ENCODE measurements at regions of chr1 and their contacts with region 1.

Region 1: DNA sequence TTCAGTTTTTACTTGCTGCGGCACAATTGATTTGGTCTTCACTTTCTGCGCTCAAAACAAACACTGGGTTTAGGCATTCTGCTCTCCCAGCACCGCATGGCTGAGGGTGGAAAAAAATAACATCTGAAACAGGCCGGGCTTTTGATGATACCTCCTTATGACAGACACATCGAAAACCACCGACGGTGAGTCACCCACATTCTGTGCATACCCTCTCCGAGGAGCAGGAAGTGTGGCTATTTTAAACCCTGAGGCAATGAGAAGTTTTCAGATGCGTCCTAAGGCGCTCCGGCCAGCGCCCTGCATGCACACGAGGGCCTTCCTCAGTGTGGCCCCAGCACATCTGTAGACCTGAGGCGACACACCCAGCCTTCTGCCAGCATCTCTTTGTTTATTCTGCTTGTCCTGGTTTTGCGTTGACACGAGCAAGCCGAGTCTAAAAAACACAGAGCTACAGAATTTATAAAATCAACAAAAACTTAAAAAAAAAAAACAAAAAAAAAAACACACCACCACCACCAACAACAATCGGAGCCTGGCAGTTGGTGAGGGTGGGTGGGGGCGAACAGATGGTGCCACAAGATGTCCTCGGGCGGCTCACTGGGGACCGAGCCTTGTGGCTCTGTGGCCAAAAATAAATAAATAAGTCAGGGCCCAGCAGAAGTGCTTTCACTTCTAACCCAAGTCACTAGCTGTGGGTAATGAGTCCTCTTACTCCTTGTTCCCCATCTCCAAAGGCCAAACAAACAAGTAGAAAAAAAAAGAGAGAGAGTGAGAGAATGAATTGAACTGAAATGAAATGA is 162.6 kb upstream of the IRF2BP2 start:
- DNase-seq: peak; percentile 88 to 93
- ATAC-seq: peak; percentile 64
- H3K4me3 ChIP-seq: no peak overlapping the region
- H3K27ac ChIP-seq: peak overlapping the region in 1 of 2 donors; percentile 62
- H3K4me1 ChIP-seq: no peaks in the 10 kb centered on the region
- H3K27me3 ChIP-seq: no peaks in the 10 kb centered on the region

Region 2: DNA sequence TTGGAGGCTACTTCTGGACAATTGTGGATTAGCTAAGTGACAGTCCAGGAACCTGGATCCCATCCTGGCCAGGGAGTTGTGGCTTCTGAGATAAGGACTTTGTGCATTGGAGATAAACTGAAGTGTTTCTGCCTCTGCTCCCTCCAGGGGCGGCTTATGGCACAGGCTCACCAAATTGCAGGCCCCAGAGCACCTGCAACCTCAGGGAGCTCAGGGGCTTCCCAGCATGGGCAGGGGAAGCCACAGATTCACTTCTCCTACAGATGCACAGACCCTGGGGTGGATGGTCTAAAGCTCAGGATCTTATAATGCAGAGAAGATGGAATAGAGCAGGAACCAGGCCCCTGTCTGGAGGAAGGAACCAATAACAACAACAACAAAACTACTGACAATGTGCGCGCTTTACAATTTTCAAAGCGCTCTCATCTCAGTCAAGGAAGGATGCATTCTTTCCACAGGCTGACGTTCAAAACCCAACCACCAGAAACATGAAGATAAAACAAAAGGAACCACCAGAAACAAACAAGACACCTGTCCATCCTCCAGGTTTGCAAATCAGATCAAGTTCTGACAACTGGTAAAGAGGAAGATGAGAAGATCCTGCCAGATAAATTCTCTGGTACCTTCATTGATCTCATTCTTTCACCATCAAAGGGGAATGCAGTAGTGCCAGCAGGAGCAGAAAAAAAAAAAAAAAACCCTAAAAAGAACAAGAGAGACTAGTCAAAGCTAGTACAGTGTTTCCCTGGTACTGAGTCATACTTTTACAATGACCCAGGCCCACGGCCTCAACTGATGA is 41.6 kb before region 1 on chr1:
- intact Hi-C with region 1: loop called (anchors 5 kb)
- DNase-seq: no peak
- ATAC-seq: no peak
- H3K4me3 ChIP-seq: no peak overlapping the region
- H3K27ac ChIP-seq: no peak overlapping the region
- H3K4me1 ChIP-seq: no peaks in the 10 kb centered on the region
- H3K27me3 ChIP-seq: no peaks in the 10 kb centered on the region

Region 3: DNA sequence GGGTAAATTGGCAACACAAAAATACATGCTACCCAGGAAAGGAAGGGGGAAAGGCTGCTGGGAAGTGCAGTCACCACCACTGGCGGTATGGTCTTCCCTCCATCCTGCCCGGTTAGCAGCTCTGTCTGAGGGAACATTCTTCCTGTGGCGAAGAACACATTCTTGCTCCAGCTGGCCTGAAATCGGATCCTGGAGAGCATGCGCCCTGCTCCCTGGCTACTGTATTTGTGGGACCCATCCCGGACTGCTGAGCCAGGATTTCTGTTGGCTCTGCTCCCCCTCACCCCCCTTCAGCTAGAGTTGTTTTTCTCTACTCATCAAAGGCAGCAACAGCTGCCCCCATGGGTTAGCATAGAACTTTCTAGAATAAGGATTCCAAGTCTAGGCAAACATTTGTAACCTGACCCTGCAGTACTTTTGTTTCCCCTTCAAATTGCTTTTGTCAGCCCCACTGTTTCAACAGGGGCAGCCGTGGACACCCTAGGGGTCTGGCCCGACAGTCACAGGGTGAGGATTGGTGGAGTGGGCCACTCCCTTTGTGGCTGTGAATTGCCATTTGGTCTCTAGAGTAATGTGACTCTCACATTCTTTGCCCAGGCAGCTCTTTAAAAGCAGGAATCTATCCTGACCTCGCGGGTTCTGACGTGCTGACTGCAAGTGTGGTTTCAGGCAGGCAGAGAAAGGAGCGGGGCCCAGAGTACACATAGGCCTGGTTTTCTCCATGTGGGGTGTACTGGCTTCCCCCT is 198.4 kb after region 1 on chr1:
- intact Hi-C with region 1: loop called in 1 of 2 experiments (anchors 5 kb)
- DNase-seq: peak; percentile 86 to 91
- ATAC-seq: peak; percentile 87
- H3K4me3 ChIP-seq: no peak overlapping the region
- H3K27ac ChIP-seq: peak overlapping the region; percentile 90 to 98
- H3K4me1 ChIP-seq: peaks cover 0 to 7% of the 10 kb centered on the region in 2 donors
- H3K27me3 ChIP-seq: no peaks in the 10 kb centered on the region

Measured in aorta (tissue), 5 donors.